ENCODE measurements at regions of chr7 and their contacts with region 1.

Region 1: DNA sequence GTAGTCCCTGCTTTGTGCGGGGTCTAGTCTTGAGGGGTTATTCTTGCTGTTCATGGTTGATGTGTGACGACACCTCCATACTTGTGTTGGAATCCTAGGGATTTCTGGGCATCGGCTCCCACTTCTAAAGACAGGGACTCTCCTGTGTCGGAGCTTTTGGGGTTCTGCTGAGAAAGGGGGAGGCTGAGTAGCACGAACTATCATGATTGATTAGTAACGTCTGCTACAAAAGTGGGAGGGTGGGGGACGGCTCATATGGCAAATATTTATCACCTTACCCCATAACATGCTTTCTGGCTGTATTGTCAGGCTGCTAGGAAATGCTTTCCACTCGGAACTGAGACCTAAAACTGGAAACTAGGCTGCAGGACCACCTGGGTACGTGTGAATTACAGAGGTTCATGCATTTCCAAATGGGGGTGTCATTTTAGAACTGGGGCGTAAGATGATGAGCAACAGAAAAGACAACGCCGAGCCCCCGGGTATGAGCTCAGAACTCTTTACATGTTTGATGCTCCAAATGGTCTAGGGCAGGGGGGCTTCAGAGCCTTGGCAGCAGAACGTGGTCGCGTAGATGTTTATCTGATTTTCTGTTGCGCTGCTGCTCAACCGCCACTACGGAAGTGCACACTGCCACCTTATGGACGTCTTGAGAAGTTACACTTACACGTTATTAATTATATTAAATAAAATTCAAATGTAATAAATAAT is 15.1 kb upstream of the NME8 start:
- DNase-seq: peak; percentile 72
- ATAC-seq: no peak

Region 2: GRCh38 chr7:37234928-37235327 is 598.3 kb before region 1 on chr7:
- intact Hi-C with region 1: loop called (anchors 5 kb)
- DNase-seq: no peak
- ATAC-seq: no peak

Region 3: DNA sequence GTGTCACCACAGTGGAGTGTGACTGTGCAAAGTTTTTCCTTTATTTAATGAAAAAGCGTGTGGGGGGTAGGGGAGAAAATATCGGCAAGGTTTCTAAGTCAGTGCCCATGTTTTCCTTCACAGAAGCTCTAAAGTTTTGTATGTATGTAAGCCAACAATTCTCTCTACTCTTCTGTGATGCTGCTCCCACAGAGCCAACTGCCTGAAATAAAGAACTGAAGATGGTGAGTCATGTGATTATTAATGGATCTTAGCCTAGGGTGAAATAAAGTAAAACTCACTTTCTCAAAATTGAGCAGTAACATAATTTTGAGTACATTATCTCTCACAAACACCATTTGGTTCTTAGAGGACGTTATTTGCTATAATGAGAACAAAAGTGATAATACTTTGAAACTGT is 528.3 kb before region 1 on chr7:
- intact Hi-C with region 1: no loop called
- DNase-seq: no peak
- ATAC-seq: no peak

Region 4: DNA sequence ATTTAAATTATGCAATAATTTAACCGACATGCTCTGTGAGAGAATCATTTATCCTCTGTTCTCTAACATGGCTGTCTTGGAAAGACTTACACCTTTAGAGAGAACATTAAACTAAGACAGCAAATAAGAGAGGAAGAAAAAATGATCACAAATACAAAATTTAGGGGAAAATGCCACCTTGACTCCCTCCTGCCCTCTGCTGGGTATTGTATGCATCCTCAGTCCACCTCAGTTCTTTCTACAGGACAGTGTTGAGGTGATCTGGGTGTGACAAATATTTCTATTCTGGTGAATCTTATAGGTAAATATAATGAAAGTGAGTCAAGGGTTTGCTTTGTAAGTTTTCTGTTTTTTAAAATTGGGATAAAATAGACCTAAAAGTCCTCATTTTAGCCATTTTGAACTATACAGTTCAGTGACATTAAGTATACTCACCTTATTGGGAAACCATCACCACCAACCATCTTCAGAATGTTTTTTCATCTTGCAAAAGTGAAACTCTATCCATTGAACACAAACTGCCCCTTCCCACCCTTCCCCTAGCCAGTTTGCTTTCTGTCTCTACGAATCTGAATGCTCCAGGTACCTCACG is 323.1 kb before region 1 on chr7:
- intact Hi-C with region 1: loop called (anchors 5 kb)
- DNase-seq: no peak
- ATAC-seq: no peak

Region 5: DNA sequence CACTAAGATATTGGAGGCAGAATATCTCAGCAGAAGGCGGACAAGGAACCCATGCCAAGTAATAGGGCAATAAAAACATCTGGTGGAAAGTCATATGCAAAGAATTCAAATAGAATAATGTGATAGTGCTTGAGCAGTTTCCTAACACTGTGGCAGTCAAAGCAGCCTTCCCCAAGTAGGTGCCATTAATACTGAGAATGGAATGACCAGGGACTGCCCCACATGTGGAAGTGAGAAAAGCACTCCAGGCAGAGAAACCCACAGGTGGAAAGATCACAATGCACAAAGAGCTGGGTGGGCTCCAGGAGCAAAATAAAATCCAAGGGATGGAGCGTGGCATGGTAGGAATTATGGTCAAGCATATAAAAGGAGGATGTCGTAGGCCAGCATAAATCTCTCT is 49.2 kb before region 1 on chr7:
- intact Hi-C with region 1: no loop called
- DNase-seq: no peak
- ATAC-seq: no peak

Region 6: GRCh38 chr7:37916673-37917660 is 83.7 kb after region 1 on chr7 and contains the start of gene SFRP4:
- intact Hi-C with region 1: no loop called
- DNase-seq: peak; percentile 68
- ATAC-seq: peak; percentile 64
- total RNA-seq, gene SFRP4: 0.32 TPM

Region 7: DNA sequence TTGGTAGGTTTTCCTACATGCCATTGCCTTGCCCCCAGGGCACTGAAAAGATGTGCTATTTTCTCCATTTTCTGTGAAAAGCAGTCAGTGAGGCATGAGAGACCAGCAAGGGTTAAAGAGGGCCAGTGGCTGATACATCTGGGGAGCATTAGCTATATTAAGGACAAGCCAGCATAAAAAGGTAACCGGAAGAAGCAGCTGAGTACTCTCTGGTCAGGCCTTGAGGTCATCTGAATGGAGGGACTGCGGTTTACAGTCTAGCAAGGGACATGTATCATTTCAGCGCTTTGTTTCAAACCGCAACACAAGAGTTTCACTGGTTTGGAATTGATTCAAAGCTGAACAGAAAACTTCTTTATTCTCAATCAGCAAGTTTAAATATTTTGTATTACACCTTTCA is 207.6 kb after region 1 on chr7:
- intact Hi-C with region 1: no loop called
- DNase-seq: no peak
- ATAC-seq: no peak